GM18951 (cell line): ENCODE measurements at regions of chr12 and their contacts with region 1.

Region 1: GRCh38 chr12:54191550-54192022 is 2.8 kb upstream of the SMUG1 start:
- POLR2A ChIP-seq: no peak

Region 2: DNA sequence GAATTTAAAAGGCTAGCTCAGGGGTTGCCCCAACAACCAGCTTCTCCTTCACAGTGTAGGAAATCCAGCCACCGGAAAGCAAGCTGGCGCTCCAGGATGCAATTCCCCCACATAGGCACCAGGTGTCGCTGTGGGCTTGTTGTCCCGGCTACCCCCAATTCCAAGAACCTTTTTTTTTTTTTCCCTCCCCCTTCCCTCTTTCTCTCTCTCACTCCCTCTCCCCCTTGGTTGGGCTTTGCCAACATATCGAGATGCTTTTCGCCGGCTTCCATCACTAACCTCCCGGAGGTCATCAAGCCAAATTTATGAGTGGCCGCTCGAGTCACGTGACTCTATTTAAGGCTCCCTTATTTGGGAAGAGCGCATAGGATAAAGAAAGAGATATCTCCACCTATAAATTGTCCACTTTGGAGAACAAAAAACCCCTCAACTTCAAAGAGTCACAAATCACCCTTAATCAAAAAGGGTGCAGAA is 158.9 kb before region 1 on chr12 and contains the start of gene HOXC5:
- in situ Hi-C with region 1: loop called (anchors 5 kb)
- POLR2A ChIP-seq: no peak

Region 3: DNA sequence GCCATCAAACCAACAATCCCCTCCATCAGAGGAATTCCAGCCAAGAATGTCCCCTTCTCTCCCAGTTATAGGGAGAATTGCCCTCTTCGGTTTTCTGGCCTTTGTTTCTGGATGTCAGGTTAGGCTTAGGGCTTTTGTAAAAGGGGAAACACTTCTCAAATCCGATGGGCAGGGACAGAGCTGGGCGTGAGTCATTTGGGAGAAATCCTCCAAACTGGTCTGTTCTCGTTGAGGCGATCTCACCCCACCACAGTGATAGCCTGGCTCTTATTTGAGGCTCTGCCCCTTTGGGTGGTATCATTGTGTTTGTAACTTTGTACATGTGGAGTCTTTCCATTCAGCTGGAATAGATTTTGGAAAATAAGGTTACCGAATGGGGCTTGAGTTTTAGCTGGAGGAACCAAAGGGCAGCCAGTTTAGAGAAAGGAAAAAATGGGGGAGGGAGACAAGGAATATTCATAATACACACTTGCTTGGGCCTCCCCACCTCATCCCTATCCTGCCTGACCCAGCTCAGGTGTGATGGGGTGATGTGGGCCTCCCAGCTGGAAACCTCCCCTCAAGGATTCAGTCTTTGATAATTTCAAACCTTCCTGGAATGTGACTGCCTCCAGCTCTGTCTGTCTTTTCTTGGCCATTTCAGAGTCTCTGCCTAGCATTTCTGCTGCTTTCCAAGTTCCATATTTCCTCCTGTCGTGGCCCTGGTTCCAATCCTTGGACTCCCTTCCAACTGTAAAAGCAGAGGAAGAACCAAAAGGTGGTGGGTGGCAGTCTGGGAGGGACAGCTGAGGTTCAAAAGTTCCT is 130.4 kb before region 1 on chr12:
- in situ Hi-C with region 1: no loop called
- POLR2A ChIP-seq: no peak

Region 4: GRCh38 chr12:55446326-55446725 is 1254.7 kb after region 1 on chr12:
- in situ Hi-C with region 1: no loop called
- POLR2A ChIP-seq: no peak